Thyroid gland (tissue), 4 donors: ENCODE measurements at regions of chr19 and their contacts with region 1.

Region 1: DNA sequence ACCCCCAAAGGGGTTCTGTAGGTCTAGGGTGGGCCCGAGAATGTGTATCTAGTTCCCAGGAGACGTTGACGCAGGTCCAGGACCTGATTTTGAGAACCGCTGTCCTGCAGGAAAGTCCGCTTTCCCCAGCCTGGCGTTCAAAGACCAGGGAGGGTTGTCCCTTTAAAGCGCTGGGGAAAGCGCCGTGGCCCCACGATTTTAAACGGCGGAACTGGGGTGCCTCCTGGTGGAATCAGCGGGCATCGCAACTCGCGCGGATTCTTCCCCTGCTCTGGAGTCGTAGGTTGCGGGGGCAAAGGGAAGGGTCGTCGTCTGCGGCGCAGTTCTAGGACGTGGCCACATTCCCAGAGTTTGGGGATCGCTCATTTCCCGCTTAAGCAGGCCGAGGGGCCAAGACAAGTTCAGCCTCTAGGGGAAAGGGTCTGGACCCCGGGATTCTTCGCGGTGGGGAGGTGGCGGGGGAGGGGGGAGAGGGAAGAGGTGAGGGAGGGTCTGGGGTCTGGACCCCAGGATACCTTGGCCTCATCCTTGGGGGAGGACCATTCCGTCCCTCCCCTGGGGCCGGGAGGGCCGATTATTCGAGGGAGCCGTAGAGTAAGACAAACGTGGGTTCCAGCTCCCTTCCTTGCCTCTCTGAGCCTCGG is 7.7 kb downstream of the PNMA8B start:
- DNase-seq: peak; percentile 73 to 77
- H3K4me3 ChIP-seq: peak overlapping the region in 1 of 3 donors; percentile 1
- H3K27ac ChIP-seq: no peak overlapping the region
- H3K4me1 ChIP-seq: peaks cover 14 to 25% of the 10 kb centered on the region in 2 donors
- H3K27me3 ChIP-seq: peaks cover 12% of the 10 kb centered on the region
- CTCF ChIP-seq: peak; percentile 85 to 98 (median 96)
- POLR2A ChIP-seq: no peak

Region 2: DNA sequence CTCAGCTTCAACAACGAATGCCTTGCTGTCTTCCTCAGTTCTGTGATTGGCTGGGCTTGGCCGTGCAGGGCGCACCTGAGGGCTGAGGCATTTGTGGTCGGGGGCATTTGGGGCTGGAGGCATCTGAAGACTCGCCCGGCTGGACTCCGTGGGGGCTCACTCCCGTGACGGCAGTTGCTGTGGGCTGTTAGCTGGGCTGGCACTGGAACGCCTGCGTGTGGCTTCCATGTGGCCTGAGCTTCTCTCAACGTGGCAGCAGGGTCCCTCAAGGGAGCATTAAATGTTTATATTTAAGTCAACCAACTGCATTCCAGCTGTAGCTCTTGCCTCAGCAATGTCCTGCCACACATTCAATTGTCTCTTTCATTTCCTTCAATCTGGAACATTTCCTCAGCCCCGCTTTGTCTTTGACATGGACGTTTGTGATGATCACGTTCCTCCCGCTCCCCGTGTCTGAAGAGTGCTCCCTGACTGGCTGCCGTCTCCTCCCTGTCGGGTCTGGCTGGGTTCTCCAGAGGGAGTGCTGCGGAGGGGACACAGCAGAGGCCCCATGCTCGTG is 95.6 kb before region 1 on chr19:
- intact Hi-C with region 1: loop called (anchors 2 kb)
- DNase-seq: no peak
- H3K4me3 ChIP-seq: no peak overlapping the region
- H3K27ac ChIP-seq: no peak overlapping the region
- H3K4me1 ChIP-seq: no peaks in the 10 kb centered on the region
- H3K27me3 ChIP-seq: no peaks in the 10 kb centered on the region
- CTCF ChIP-seq: no peak
- POLR2A ChIP-seq: no peak

Region 3: GRCh38 chr19:46402725-46403124 is 85.2 kb before region 1 on chr19:
- intact Hi-C with region 1: loop called (anchors 2 kb)
- DNase-seq: no peak
- H3K4me3 ChIP-seq: no peak overlapping the region
- H3K27ac ChIP-seq: no peak overlapping the region
- H3K4me1 ChIP-seq: peaks cover 8 to 17% of the 10 kb centered on the region in 2 donors
- H3K27me3 ChIP-seq: no peaks in the 10 kb centered on the region
- CTCF ChIP-seq: no peak
- POLR2A ChIP-seq: no peak

Region 4: DNA sequence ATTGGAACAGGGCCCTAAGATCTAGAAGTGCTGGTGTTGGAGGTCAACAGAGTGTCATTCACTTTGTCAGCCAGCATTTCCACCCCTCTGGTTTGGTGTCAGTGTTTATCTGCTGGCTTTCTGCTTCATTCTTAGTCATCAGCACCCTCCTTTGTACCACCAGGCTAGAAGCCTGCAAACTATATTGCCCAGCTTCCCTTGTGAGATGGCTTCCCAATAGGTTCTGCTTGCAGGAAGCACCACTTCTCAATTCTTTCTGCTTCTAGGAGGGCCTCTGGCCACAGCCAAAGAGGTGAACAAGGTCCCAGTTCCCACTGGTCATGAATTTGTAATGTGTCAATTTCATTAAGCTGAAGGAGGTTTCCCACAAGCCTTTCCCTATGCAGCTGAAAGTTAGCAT is 76.8 kb after region 1 on chr19:
- intact Hi-C with region 1: no loop called
- DNase-seq: no peak
- H3K4me3 ChIP-seq: no peak overlapping the region
- H3K27ac ChIP-seq: no peak overlapping the region
- H3K4me1 ChIP-seq: peaks cover 4 to 11% of the 10 kb centered on the region in 2 donors
- H3K27me3 ChIP-seq: no peaks in the 10 kb centered on the region
- CTCF ChIP-seq: no peak
- POLR2A ChIP-seq: no peak